ENCODE measurements at regions of chr3 and their contacts with region 1.

Region 1: GRCh38 chr3:40191850-40192448 is 117.6 kb upstream of the EIF1B start:
- DNase-seq: peak in 4 of 5 donors; percentile 30 to 56 (median 40)
- H3K4me3 ChIP-seq: no peak overlapping the region
- H3K4me3 Mint-ChIP-seq: no peak overlapping the region
- H3K27ac ChIP-seq: no peak overlapping the region
- H3K27ac Mint-ChIP-seq: no peak overlapping the region
- H3K4me1 ChIP-seq: no peaks in the 10 kb centered on the region
- H3K4me1 Mint-ChIP-seq: peaks cover 0 to 2% (median 0%) of the 10 kb centered on the region in 4 donors
- H3K27me3 ChIP-seq: no peaks in the 10 kb centered on the region
- H3K27me3 Mint-ChIP-seq: no peaks in the 10 kb centered on the region

Region 2: DNA sequence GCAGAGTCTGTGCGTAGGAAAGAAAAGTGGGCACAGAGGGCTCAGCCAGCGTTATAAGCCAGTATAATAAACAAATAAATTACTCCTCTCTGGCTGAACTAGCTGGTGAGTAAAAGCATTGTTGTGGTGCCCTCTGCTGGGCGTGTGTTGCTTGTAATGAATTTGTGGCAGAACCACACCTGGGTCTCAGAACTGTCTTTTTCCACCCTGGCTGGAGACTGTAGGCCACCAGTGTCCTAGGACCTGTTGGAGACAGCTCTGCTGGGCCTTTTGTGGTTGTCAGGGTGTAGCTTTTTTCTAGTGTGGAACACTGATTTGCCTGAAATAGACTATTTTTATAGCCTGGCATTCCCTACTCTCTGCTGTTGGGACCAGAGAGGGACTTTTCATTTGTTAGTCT is 12.9 kb before region 1 on chr3:
- CTCF ChIA-PET with region 1: interaction called, 68 read pairs
- POLR2A ChIA-PET with region 1: no interaction called
- intact Hi-C with region 1: no loop called
- DNase-seq: peak; percentile 19 to 48 (median 25)
- H3K4me3 ChIP-seq: no peak overlapping the region
- H3K4me3 Mint-ChIP-seq: no peak overlapping the region
- H3K27ac ChIP-seq: no peak overlapping the region
- H3K27ac Mint-ChIP-seq: no peak overlapping the region
- H3K4me1 ChIP-seq: no peaks in the 10 kb centered on the region
- H3K4me1 Mint-ChIP-seq: no peaks in the 10 kb centered on the region
- H3K27me3 ChIP-seq: no peaks in the 10 kb centered on the region
- H3K27me3 Mint-ChIP-seq: peaks cover 0 to 1% of the 10 kb centered on the region in 2 donors

Measured in CD4-positive, alpha-beta memory T cell (primary cell).